Ascending aorta (tissue), 2 donors: ENCODE measurements at regions of chr3 and their contacts with region 1.

Region 1: DNA sequence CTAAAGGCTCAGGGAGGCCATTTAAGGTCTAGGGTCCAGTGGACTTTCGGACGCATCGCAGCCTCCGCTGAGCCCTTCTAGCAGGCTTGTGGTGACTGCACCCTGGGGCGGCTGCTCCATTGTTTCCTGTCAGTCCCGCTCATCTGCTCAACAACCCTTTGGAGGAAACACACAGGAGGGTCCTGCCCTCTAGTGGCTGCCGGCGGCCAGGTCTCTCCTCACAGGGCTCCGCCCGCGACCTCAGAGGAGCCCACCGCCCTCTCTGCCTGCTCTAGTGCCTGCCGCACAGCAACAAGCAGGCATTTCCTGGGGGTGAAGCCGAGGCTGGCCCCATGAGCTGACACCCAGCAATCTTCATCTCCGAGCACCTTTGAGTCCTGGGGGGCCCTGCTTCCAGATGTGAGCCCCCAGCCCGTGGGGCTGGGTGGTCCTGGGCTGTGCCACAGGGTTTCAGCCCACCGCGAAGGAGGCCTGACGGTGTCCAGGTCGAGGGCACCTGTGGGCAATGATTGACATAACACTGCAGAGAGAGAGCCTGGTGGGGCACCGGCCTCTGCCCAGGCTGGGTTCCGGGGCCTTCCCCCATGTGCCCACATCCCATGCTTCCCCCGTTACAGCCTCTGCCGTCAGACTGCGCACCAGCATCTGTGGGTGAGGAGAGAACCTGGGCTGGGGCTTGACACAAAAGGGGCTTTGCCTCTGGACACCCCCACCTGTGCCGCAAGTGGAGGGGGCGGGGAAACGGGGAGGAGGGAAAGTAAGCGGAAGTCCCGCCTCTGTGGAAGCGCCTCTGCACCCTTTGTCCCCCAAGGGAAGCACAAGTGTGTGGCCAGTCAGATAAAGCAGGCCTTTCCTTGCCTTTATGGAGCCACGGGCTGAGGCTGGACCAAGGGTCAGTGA is 27.0 kb upstream of the SFMBT1 start:
- DNase-seq: peak; percentile 35 to 93
- H3K4me3 ChIP-seq: peak overlapping the region; percentile 46 to 71
- H3K27ac ChIP-seq: peak overlapping the region; percentile 19 to 58
- H3K4me1 ChIP-seq: peaks cover 0 to 8% of the 10 kb centered on the region in 2 donors
- H3K27me3 ChIP-seq: no peaks in the 10 kb centered on the region
- CTCF ChIP-seq: peak; percentile 90 to 94 (median 93)

Region 2: GRCh38 chr3:52742418-52743041 is 330.4 kb before region 1 on chr3:
- intact Hi-C with region 1: loop called (anchors 5 kb)
- DNase-seq: no peak
- H3K4me3 ChIP-seq: no peak overlapping the region
- H3K27ac ChIP-seq: no peak overlapping the region
- H3K4me1 ChIP-seq: no peaks in the 10 kb centered on the region
- H3K27me3 ChIP-seq: no peaks in the 10 kb centered on the region
- CTCF ChIP-seq: peak; percentile 47 to 64 (median 51)

Region 3: DNA sequence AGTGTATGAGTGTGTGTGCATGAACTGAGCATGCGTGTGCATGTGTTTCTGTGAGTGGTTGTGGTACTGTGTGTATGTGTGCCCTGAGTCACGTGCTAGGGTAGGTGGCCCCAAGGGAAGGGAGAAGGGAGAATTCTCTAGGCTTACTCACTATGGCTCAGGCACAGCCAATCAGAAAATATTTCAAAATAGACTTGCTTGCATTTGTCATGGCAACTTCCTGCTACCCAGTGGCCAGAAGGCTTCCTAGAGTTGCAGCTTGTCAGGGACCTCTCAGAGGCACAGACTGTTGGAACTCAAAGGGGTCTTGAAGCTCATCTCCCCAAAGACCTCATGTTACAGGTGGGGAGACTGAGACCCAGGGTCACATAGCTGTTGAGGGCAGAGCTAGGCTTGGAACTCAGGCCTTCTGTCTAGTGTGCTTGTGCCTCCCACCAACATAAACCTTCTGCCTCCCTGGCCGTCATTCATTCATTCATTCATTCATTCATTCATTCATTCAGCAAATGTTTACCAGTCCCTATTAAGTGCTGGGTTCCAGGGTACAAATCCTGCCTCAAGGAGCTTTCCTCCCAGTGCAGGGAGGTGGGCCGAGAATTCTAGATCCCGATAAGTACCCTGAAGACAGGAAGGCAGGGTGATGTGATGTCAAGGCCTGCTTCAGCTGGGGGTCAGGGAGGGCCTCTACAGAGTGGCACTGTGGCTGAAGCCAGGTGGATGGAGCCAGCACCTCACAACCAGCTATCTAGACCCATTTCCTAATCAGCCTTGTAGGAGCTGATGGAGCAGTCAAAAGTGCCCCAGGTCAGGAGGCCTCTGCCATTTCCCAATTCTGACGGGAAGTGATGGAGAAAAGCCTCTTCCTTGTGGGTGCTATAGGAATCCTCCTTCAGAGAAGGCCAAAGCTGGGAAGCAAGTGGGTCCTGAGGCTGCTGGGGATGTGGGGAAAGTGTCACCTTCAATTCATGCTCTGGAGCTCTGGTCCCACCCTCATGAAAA is 68.2 kb after region 1 on chr3:
- intact Hi-C with region 1: no loop called
- DNase-seq: no peak
- H3K4me3 ChIP-seq: no peak overlapping the region
- H3K27ac ChIP-seq: peak overlapping the region in 1 of 2 donors; percentile 14
- H3K4me1 ChIP-seq: peaks cover 5 to 17% of the 10 kb centered on the region in 2 donors
- H3K27me3 ChIP-seq: no peaks in the 10 kb centered on the region
- CTCF ChIP-seq: no peak